Activated CD8-positive, alpha-beta T cell treated with anti-CD3 and anti-CD28 coated beads for 36 hours (primary cell): ENCODE measurements at regions of chr17 and their contacts with region 1.

Region 1: GRCh38 chr17:47663912-47664625 is 14.3 kb downstream of the KPNB1 start:
- DNase-seq: peak; percentile 76
- ATAC-seq: peak; percentile 77
- H3K4me3 Mint-ChIP-seq: no peak overlapping the region
- H3K27ac Mint-ChIP-seq: peak overlapping the region; percentile 83
- H3K4me1 Mint-ChIP-seq: peaks cover 23% of the 10 kb centered on the region
- H3K27me3 Mint-ChIP-seq: no peaks in the 10 kb centered on the region
- CTCF ChIP-seq: peak; percentile 89

Region 2: DNA sequence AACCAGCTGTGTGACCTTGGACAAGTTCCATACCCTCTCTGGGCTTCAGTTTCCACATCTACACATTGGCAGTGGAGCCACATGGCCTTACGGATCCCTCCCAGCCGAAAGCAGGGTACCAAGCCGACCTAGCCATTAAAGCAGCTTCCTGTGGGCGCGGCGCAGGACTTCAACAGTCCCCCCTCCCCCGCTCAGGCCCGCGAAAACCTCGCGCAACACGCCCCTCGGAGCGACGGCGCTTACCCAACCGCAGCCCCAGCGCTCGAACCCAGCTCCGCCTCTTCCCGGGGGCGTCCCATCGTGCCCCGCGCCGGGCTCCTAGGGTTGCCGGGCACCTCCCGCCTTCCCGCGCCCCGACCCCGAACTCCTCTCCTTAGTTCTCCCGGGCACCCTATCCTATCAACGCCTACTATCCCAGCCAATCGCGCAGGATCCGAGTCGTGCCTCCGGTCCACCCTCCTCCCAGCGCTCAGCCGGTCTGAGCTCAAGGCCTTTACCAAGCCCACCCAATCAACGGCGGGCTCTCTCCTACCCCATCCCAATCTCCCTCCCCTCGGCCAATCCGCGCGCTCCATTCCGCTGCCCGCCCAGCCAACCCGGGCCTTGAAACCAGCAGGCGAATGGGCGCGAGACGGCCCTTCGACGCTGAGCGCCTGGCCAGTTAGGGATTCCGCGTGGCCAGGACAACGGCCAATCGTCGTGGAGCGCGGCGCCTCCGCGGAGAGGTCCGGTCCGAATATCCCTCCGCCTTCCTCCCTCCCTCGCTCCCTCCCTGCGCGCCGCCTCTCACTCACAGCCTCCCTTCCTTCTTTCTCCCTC is 14.7 kb before region 1 on chr17 and contains the start of gene KPNB1:
- CTCF ChIA-PET with region 1: interaction called, 92 read pairs
- POLR2A ChIA-PET with region 1: interaction called, 583 read pairs
- intact Hi-C with region 1: no loop called
- DNase-seq: peak; percentile 99
- ATAC-seq: peak; percentile 84
- H3K4me3 Mint-ChIP-seq: peak within 1 kb of the TSS; percentile 94
- H3K27ac Mint-ChIP-seq: peak within 1 kb of the TSS; percentile 99
- H3K4me1 Mint-ChIP-seq: peaks cover 46% of the 10 kb centered on the region
- H3K27me3 Mint-ChIP-seq: no peaks in the 10 kb centered on the region
- CTCF ChIP-seq: no peak
- total RNA-seq, gene KPNB1: 589 to 605 TPM

Region 3: GRCh38 chr17:47675380-47676198 is 11.5 kb after region 1 on chr17:
- CTCF ChIA-PET with region 1: interaction called, 90 read pairs
- POLR2A ChIA-PET with region 1: interaction called, 583 read pairs
- intact Hi-C with region 1: no loop called
- DNase-seq: no peak
- ATAC-seq: no peak
- H3K4me3 Mint-ChIP-seq: no peak overlapping the region
- H3K27ac Mint-ChIP-seq: peak overlapping the region; percentile 21
- H3K4me1 Mint-ChIP-seq: peaks cover 32% of the 10 kb centered on the region
- H3K27me3 Mint-ChIP-seq: no peaks in the 10 kb centered on the region
- CTCF ChIP-seq: no peak

Region 4: DNA sequence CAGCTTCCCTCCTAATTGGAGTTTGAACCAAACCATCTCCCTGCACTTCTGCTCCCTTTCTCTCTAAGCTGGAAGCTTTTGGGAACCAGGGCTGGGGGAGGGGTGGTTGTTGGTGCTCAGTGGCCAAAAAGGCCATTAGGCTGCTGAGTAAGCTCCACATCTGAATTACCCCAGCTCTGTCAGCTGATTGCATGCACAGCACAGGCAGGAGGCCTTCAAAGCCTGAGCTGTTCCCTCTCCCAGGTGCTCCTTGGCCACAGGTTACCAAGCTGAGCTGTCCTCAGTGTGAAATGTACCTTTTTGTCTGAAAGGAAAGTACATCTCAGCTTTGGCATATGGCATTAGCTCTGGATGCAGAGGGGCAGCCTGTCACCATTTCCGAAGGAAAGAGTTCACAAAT is 23.7 kb after region 1 on chr17:
- CTCF ChIA-PET with region 1: interaction called, 90 read pairs
- POLR2A ChIA-PET with region 1: interaction called, 583 read pairs
- intact Hi-C with region 1: no loop called
- DNase-seq: no peak
- ATAC-seq: no peak
- H3K4me3 Mint-ChIP-seq: no peak overlapping the region
- H3K27ac Mint-ChIP-seq: no peak overlapping the region
- H3K4me1 Mint-ChIP-seq: peaks cover 24% of the 10 kb centered on the region
- H3K27me3 Mint-ChIP-seq: no peaks in the 10 kb centered on the region
- CTCF ChIP-seq: no peak

Region 5: GRCh38 chr17:47733047-47733673 is 69.1 kb after region 1 on chr17 and contains the start of gene TBX21:
- CTCF ChIA-PET with region 1: interaction called, 18 read pairs
- POLR2A ChIA-PET with region 1: interaction called, 4 read pairs
- intact Hi-C with region 1: no loop called
- DNase-seq: peak; percentile 97
- ATAC-seq: peak; percentile 88
- H3K4me3 Mint-ChIP-seq: peak within 1 kb of the TSS; percentile 91
- H3K27ac Mint-ChIP-seq: peak within 1 kb of the TSS; percentile 97
- H3K4me1 Mint-ChIP-seq: peaks cover 57% of the 10 kb centered on the region
- H3K27me3 Mint-ChIP-seq: no peaks in the 10 kb centered on the region
- CTCF ChIP-seq: peak; percentile 32
- total RNA-seq, gene TBX21: 53.0 to 56.9 TPM

Region 6: GRCh38 chr17:47742319-47743181 is 78.5 kb after region 1 on chr17:
- CTCF ChIA-PET with region 1: interaction called, 26 read pairs
- POLR2A ChIA-PET with region 1: interaction called, 3 read pairs
- intact Hi-C with region 1: no loop called
- DNase-seq: peak; percentile 62
- ATAC-seq: peak; percentile 42
- H3K4me3 Mint-ChIP-seq: peak overlapping the region; percentile 35
- H3K27ac Mint-ChIP-seq: peak overlapping the region; percentile 64
- H3K4me1 Mint-ChIP-seq: peaks cover 48% of the 10 kb centered on the region
- H3K27me3 Mint-ChIP-seq: no peaks in the 10 kb centered on the region
- CTCF ChIP-seq: peak; percentile 53

Region 7: GRCh38 chr17:47789611-47790561 is 125.8 kb after region 1 on chr17:
- CTCF ChIA-PET with region 1: interaction called, 12 read pairs
- POLR2A ChIA-PET with region 1: interaction called, 5 read pairs
- intact Hi-C with region 1: no loop called
- DNase-seq: peak; percentile 70
- ATAC-seq: peak; percentile 97
- H3K4me3 Mint-ChIP-seq: peak overlapping the region; percentile 66
- H3K27ac Mint-ChIP-seq: no peak overlapping the region
- H3K4me1 Mint-ChIP-seq: peaks cover 9% of the 10 kb centered on the region
- H3K27me3 Mint-ChIP-seq: peaks cover 58% of the 10 kb centered on the region
- CTCF ChIP-seq: peak; percentile 78